Activated CD4-positive, alpha-beta T cell treated with anti-CD3 and anti-CD28 coated beads for 36 hours (primary cell): ENCODE measurements at regions of chr3 and their contacts with region 1.

Region 1: GRCh38 chr3:69120879-69121464 is 1.4 kb downstream of the LMOD3 start:
- DNase-seq: peak; percentile 89
- ATAC-seq: peak; percentile 78
- H3K4me3 Mint-ChIP-seq: no peak overlapping the region
- H3K27ac Mint-ChIP-seq: no peak overlapping the region
- H3K4me1 Mint-ChIP-seq: peaks cover 3% of the 10 kb centered on the region
- H3K27me3 Mint-ChIP-seq: no peaks in the 10 kb centered on the region

Region 2: GRCh38 chr3:69051756-69052471 is 69.1 kb before region 1 on chr3 and contains the start of gene TMF1:
- CTCF ChIA-PET with region 1: interaction called, 10 read pairs
- POLR2A ChIA-PET with region 1: no interaction called
- intact Hi-C with region 1: no loop called
- DNase-seq: peak; percentile 99
- ATAC-seq: peak; percentile 95
- H3K4me3 Mint-ChIP-seq: peak within 1 kb of the TSS; percentile 99
- H3K27ac Mint-ChIP-seq: peak within 1 kb of the TSS; percentile 98
- H3K4me1 Mint-ChIP-seq: peaks cover 40% of the 10 kb centered on the region
- H3K27me3 Mint-ChIP-seq: no peaks in the 10 kb centered on the region
- total RNA-seq, gene TMF1: 33.2 to 34.1 TPM

Region 3: DNA sequence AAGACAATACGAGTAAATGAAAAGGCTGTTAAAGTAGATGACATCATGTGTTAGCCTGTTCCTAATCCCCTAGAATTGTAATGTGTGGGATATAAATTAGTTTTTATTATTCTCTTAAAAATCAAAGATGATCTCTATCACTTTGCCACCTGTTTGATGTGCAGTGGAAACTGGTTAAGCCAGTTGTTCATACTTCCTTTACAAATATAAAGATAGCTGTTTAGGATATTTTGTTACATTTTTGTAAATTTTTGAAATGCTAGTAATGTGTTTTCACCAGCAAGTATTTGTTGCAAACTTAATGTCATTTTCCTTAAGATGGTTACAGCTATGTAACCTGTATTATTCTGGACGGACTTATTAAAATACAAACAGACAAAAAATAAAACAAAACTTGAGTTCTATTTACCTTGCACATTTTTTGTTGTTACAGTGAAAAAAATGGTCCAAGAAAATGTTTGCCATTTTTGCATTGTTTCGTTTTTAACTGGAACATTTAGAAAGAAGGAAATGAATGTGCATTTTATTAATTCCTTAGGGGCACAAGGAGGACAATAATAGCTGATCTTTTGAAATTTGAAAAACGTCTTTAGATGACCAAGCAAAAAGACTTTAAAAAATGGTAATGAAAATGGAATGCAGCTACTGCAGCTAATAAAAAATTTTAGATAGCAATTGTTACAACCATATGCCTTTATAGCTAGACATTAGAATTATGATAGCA is 15.8 kb before region 1 on chr3:
- CTCF ChIA-PET with region 1: interaction called, 16 read pairs
- POLR2A ChIA-PET with region 1: no interaction called
- intact Hi-C with region 1: no loop called
- DNase-seq: no peak
- ATAC-seq: no peak
- H3K4me3 Mint-ChIP-seq: no peak overlapping the region
- H3K27ac Mint-ChIP-seq: peak overlapping the region; percentile 42
- H3K4me1 Mint-ChIP-seq: peaks cover 38% of the 10 kb centered on the region
- H3K27me3 Mint-ChIP-seq: no peaks in the 10 kb centered on the region

Region 4: GRCh38 chr3:69273896-69274295 is 152.9 kb after region 1 on chr3:
- CTCF ChIA-PET with region 1: no interaction called
- POLR2A ChIA-PET with region 1: no interaction called
- intact Hi-C with region 1: no loop called
- DNase-seq: no peak
- ATAC-seq: no peak
- H3K4me3 Mint-ChIP-seq: no peak overlapping the region
- H3K27ac Mint-ChIP-seq: no peak overlapping the region
- H3K4me1 Mint-ChIP-seq: no peaks in the 10 kb centered on the region
- H3K27me3 Mint-ChIP-seq: peaks cover 4% of the 10 kb centered on the region

Region 5: GRCh38 chr3:69410250-69410649 is 289.3 kb after region 1 on chr3:
- CTCF ChIA-PET with region 1: interaction called, 16 read pairs
- POLR2A ChIA-PET with region 1: no interaction called
- intact Hi-C with region 1: loop called in 1 of 2 experiments (anchors 1 kb)
- DNase-seq: peak; percentile 82
- ATAC-seq: peak; percentile 98
- H3K4me3 Mint-ChIP-seq: no peak overlapping the region
- H3K27ac Mint-ChIP-seq: no peak overlapping the region
- H3K4me1 Mint-ChIP-seq: peaks cover 4% of the 10 kb centered on the region
- H3K27me3 Mint-ChIP-seq: peaks cover 3% of the 10 kb centered on the region

Region 6: DNA sequence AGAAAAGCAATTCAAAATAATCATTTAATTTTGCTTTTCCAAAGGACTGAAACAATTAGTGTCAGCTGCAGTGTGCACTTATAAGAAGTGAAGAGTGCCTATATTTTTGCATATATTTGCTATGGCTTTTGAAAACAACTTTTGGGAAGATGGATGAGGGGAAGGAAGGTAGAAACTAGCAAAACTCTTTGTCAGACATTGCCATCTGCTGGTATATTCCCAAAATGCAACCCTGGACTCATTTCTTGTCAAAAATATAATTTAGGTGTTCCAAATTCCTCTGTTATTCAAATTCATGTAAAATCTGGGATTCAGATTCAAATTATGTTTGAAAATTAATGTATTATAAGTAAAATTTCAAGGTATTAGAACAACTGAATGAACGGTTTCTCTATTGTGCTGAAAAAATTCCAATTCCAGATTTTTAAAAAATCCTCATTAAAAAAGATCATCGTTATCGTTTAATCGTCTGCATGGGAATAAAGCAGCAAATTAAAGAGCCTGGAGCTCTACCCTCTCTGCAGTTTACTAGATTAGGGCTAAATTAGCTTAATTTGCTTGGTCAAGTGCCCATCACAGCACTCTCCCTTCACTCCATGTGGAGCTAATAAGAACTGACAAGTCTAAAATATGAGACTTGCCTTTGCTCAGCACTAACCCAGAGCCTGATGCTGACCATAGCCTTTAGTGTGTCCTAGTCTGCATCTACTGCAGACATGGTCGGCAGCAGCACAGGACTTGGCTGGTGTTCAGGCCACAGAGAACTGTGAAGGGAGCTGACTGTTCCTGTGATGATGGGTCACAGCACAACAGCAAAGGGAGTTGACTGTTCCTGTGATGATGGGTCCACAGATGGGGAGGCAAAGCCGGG is 550.3 kb after region 1 on chr3:
- CTCF ChIA-PET with region 1: no interaction called
- POLR2A ChIA-PET with region 1: no interaction called
- intact Hi-C with region 1: loop called (anchors 2 to 10 kb)
- DNase-seq: peak; percentile 11
- ATAC-seq: no peak
- H3K4me3 Mint-ChIP-seq: no peak overlapping the region
- H3K27ac Mint-ChIP-seq: no peak overlapping the region
- H3K4me1 Mint-ChIP-seq: no peaks in the 10 kb centered on the region
- H3K27me3 Mint-ChIP-seq: no peaks in the 10 kb centered on the region